ENCODE measurements at regions of chr15 and their contacts with region 1.

Region 1: DNA sequence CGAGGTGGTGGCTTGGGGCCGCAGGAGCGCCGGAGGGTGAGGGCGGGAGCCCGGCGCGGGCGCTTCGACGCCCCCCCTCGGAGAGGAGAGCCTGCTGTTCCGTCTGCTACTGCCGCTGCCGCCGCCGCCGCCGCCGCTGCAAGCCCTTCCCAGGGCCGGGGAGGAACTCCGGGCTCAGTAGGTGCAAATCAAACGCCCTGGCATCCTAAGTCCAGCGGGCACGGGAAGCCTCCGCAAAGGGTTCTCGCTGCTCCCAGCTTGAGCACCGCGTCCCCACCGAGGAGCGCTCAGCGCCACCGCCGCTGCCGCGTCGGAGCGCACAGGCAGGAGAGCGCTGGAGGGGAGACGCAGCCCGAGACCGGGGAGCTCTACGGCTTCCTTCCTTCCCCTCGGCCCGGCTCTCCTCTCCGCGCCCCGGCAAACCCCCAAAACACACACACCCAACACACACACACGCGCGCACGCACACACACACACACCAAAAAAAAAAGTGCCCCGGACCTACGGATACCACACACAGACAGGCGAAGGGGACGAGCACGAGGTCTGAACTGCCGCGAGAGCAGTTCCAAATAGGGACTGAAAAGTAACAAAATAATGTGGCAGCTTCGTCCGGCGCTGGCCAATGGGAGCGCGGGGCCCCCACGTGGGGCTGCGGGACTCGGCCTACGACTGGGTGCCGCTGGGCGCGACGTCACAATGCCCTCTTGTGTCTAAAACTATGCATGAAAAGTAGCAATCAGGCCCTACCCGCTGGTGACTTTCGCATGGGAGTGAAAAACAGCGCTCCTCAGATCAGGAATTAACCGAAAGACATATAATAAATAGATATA is at the start of gene TLE3:
- DNase-seq: peak; percentile 96 to 97
- ATAC-seq: peak; percentile 40 to 48
- H3K4me3 ChIP-seq: peak within 1 kb of the TSS; percentile 70 to 83 (median 76)
- H3K27ac ChIP-seq: peak within 1 kb of the TSS; percentile 88 to 96 (median 91)
- H3K4me1 ChIP-seq: peaks cover 47 to 65% of the 10 kb centered on the region in 2 donors
- H3K27me3 ChIP-seq: peaks cover 0 to 12% (median 3%) of the 10 kb centered on the region in 3 donors
- CTCF ChIP-seq: peak in 3 of 5 experiments; percentile 40 to 50 (median 43)
- POLR2A ChIP-seq: peak; percentile 83 to 95
- total RNA-seq, gene TLE3: 4.6 to 35.3 (median 13.3) TPM

Region 2: GRCh38 chr15:69729161-69729748 is 368.3 kb before region 1 on chr15:
- in situ Hi-C with region 1: no loop called
- intact Hi-C with region 1: loop called (anchors 10 kb)
- DNase-seq: no peak
- ATAC-seq: no peak
- H3K4me3 ChIP-seq: no peak overlapping the region
- H3K27ac ChIP-seq: no peak overlapping the region
- H3K4me1 ChIP-seq: no peaks in the 10 kb centered on the region
- H3K27me3 ChIP-seq: no peaks in the 10 kb centered on the region
- CTCF ChIP-seq: peak; percentile 25 to 77 (median 61)
- POLR2A ChIP-seq: no peak

Region 3: DNA sequence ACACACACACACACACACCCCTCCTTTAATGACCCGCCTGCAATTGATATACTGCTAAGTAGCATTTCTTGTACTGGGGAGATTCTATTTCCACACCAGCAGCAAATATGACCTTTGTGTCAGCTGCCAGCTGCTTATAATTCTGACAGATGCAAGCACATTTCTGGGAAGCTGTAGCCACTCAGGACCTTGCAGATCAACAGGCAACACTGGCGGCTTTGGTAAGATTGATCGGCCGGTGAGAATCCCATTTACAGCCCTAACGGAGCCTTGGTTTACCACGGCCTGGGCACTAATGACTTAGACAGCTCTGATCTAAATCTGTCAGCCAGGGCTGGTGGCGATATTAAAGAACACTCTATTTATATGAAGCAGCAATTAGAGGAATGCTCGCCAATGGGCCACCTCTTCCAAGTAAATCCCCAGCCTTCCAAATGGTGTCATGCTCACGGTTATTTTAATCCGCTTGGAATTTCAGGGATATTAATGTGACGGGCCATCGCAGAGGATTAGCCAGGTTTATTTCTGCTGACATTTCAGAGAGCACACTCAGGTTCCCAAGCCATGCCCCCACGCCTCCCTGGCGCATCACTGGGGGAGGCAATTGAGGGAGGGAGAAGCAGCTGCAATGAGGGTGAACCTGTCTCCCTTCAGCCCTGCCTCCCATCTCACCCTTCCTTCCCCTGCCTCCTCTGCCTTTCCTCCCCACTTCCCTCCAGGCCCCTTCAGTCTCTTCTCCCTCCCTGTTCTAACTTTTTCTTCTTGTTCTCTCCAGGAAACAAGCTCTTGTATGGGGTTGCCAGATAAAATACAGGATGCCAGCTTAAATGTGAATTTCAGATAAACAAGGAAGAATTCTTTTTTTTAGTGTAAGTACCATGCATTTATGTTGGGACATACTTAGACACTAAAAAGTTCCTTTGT is 286.9 kb before region 1 on chr15:
- in situ Hi-C with region 1: no loop called
- intact Hi-C with region 1: loop called (anchors 2 kb)
- DNase-seq: peak; percentile 59 to 68
- ATAC-seq: peak; percentile 62 to 80
- H3K4me3 ChIP-seq: peak overlapping the region in 1 of 4 donors; percentile 6
- H3K27ac ChIP-seq: peak overlapping the region; percentile 80 to 87 (median 82)
- H3K4me1 ChIP-seq: peaks cover 16 to 19% of the 10 kb centered on the region in 2 donors
- H3K27me3 ChIP-seq: no peaks in the 10 kb centered on the region
- CTCF ChIP-seq: no peak
- POLR2A ChIP-seq: no peak

Region 4: GRCh38 chr15:70111203-70112073 is 13.9 kb after region 1 on chr15:
- in situ Hi-C with region 1: no loop called
- intact Hi-C with region 1: loop called (anchors 1 kb)
- DNase-seq: peak in 1 of 2 donors; percentile 52
- ATAC-seq: peak; percentile 85 to 95
- H3K4me3 ChIP-seq: peak overlapping the region in 3 of 4 donors; percentile 18 to 34 (median 31)
- H3K27ac ChIP-seq: peak overlapping the region; percentile 68 to 89 (median 78)
- H3K4me1 ChIP-seq: peaks cover 12 to 13% of the 10 kb centered on the region in 2 donors
- H3K27me3 ChIP-seq: no peaks in the 10 kb centered on the region
- CTCF ChIP-seq: no peak
- POLR2A ChIP-seq: no peak

Region 5: GRCh38 chr15:70127288-70127746 is 29.8 kb after region 1 on chr15:
- in situ Hi-C with region 1: no loop called
- intact Hi-C with region 1: no loop called
- DNase-seq: no peak
- ATAC-seq: no peak
- H3K4me3 ChIP-seq: no peak overlapping the region
- H3K27ac ChIP-seq: no peak overlapping the region
- H3K4me1 ChIP-seq: peaks cover 9 to 10% of the 10 kb centered on the region in 2 donors
- H3K27me3 ChIP-seq: no peaks in the 10 kb centered on the region
- CTCF ChIP-seq: no peak
- POLR2A ChIP-seq: no peak

Region 6: GRCh38 chr15:70196314-70197291 is 99.0 kb after region 1 on chr15:
- in situ Hi-C with region 1: loop called in 1 of 4 experiments (anchors 25 kb)
- intact Hi-C with region 1: loop called (anchors 1 kb)
- DNase-seq: peak; percentile 95 to 98
- ATAC-seq: peak; percentile 85 to 86
- H3K4me3 ChIP-seq: peak overlapping the region in 1 of 4 donors; percentile 4
- H3K27ac ChIP-seq: peak overlapping the region; percentile 91 to 96 (median 94)
- H3K4me1 ChIP-seq: peaks cover 38 to 39% of the 10 kb centered on the region in 2 donors
- H3K27me3 ChIP-seq: no peaks in the 10 kb centered on the region
- CTCF ChIP-seq: peak in 2 of 5 experiments; percentile 20 to 31
- POLR2A ChIP-seq: peak; percentile 39 to 44

Region 7: DNA sequence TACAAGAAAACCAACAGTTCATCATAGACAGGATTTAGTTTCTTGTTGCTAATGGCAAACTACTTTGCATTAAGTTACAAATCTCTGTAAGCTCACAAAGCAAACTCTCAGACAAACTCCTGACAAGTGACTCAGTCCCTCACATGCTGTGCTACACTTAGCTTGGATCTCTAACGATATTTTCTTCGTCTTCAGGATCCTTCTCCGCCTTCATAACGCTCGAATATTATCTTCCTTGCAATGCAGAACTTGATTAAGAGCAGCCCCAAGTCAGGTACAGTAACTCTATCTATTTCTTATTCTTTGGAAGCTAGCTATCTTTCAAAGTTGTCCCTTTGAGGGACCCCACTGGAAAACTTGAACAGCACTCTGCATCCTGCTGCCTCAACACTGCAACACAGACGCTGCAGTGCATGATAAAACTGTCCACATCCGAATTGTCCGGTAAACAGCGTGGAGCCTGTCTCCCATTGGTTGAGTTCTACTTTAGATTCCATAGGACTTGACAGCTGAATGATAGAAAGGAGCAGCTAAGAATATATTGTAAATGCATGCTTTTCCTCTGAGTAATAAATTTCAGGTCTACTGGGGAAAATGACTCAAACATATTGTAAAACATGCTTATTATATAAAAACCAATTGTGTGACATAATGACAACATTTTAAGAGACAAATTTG is 604.5 kb after region 1 on chr15:
- in situ Hi-C with region 1: no loop called
- intact Hi-C with region 1: loop called (anchors 5 kb)
- DNase-seq: peak; percentile 48 to 56
- ATAC-seq: peak; percentile 85 to 90
- H3K4me3 ChIP-seq: peak overlapping the region; percentile 41 to 53 (median 46)
- H3K27ac ChIP-seq: peak overlapping the region; percentile 79 to 92 (median 88)
- H3K4me1 ChIP-seq: peaks cover 61 to 92% of the 10 kb centered on the region in 2 donors
- H3K27me3 ChIP-seq: no peaks in the 10 kb centered on the region
- CTCF ChIP-seq: no peak
- POLR2A ChIP-seq: peak; percentile 65 to 85

Measured in gastrocnemius medialis (tissue), 4 donors.